ENCODE measurements at regions of chr4 and their contacts with region 1.

Region 1: GRCh38 chr4:52038103-52038912 is at the start of gene SGCB:
- DNase-seq: peak; percentile 31
- ATAC-seq: peak; percentile 98
- H3K4me3 ChIP-seq: peak within 1 kb of the TSS; percentile 98
- H3K27ac ChIP-seq: peak within 1 kb of the TSS; percentile 92
- H3K4me1 ChIP-seq: 0 out of 2 replicates have a peak, but pooled peaks cover 3% of the 10 kb centered on the region
- H3K27me3 ChIP-seq: peaks cover 17% of the 10 kb centered on the region
- CTCF ChIP-seq: no peak
- POLR2A ChIP-seq: no peak
- RAD21 ChIP-seq: no peak
- total RNA-seq, gene SGCB: 16.3 and 25.8 TPM in 2 replicates

Region 2: DNA sequence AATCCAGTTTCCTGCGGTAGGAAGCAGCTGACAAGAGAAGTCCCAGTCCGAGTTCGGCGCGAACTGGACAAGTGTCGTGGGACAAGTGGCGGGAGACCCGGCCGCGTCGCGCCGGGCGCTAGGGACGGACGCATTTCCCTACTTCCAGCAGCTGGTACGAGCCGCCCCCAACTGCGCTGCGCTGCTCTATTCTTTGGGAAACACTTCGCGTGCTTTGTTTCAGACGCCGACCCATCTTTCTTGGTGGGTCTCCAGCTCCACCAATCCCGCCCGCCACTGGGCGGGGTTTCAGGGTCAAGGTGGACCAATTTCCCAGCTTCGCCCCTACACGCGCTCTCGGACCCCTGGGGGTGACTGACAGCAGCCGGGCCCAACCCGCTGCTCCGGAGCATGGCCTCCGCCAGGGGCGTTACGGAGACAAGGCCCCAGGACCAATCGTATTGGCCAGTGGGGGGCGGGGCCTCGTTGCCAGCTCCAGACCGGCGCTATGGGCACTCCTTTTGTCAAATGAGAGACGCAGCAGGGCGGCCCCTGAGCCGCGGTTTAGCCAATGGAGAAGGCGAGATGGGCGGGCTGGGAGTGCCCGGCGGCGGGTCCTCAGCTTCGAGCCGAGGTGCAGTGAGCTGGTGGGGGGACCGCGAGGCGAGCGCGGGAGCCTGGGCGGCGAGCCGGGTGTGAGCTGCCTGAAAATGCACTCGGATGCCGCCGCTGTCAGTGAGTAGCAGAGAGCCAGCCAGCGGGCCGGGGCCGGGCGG is 195.6 kb before region 1 on chr4 and contains the start of gene DCUN1D4:
- CTCF ChIA-PET with region 1: no interaction called
- POLR2A ChIA-PET with region 1: no interaction called
- dilution Hi-C with region 1: no loop called
- in situ Hi-C with region 1: no loop called
- intact Hi-C with region 1: loop called (anchors 5 kb)
- DNase-seq: peak; percentile 99
- ATAC-seq: peak; percentile 91
- H3K4me3 ChIP-seq: peak within 1 kb of the TSS; percentile 80
- H3K27ac ChIP-seq: peak within 1 kb of the TSS; percentile 96
- H3K4me1 ChIP-seq: peaks cover 1% of the 10 kb centered on the region; the same call in 1 of the 2 replicates
- H3K27me3 ChIP-seq: no peaks in the 10 kb centered on the region
- CTCF ChIP-seq: peak; percentile 59
- POLR2A ChIP-seq: peak; percentile 46; the same call in 1 of the 2 replicates
- RAD21 ChIP-seq: no peak
- total RNA-seq, gene DCUN1D4: 37.8 and 44.3 TPM in 2 replicates

Region 3: GRCh38 chr4:51963841-51964517 is 74.3 kb before region 1 on chr4:
- CTCF ChIA-PET with region 1: no interaction called
- POLR2A ChIA-PET with region 1: no interaction called
- dilution Hi-C with region 1: no loop called
- in situ Hi-C with region 1: no loop called
- intact Hi-C with region 1: no loop called
- DNase-seq: no peak
- ATAC-seq: no peak
- H3K4me3 ChIP-seq: no peak overlapping the region
- H3K27ac ChIP-seq: no peak overlapping the region
- H3K4me1 ChIP-seq: no peaks in the 10 kb centered on the region
- H3K27me3 ChIP-seq: no peaks in the 10 kb centered on the region; the same call in none of the 2 replicates
- CTCF ChIP-seq: no peak
- POLR2A ChIP-seq: no peak
- RAD21 ChIP-seq: no peak

Region 4: DNA sequence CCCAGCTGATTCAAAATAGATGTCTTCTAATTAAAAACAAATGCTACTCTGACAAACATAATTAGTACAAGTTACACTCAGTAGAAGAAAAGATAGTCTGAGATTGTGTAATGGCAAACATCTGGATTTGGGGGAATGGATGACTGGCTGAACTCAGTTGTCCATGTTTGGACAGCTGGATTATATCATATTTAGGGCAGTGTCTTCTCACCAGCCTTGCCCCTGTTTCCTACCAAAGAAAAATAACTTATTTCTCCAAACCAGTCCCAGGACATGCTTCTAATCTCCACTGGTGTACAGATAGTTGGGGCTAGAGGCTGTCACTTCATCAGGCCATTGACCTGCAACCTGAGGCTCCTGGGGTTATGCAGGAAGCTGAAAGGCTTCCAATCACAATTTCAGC is 383.5 kb after region 1 on chr4:
- CTCF ChIA-PET with region 1: no interaction called
- POLR2A ChIA-PET with region 1: no interaction called
- dilution Hi-C with region 1: no loop called
- in situ Hi-C with region 1: no loop called
- intact Hi-C with region 1: no loop called
- DNase-seq: no peak
- ATAC-seq: no peak
- H3K4me3 ChIP-seq: no peak overlapping the region
- H3K27ac ChIP-seq: no peak overlapping the region
- H3K4me1 ChIP-seq: no peaks in the 10 kb centered on the region
- H3K27me3 ChIP-seq: no peaks in the 10 kb centered on the region
- CTCF ChIP-seq: no peak
- POLR2A ChIP-seq: no peak
- RAD21 ChIP-seq: no peak